ENCODE measurements at regions of chr6 and their contacts with region 1.

Region 1: DNA sequence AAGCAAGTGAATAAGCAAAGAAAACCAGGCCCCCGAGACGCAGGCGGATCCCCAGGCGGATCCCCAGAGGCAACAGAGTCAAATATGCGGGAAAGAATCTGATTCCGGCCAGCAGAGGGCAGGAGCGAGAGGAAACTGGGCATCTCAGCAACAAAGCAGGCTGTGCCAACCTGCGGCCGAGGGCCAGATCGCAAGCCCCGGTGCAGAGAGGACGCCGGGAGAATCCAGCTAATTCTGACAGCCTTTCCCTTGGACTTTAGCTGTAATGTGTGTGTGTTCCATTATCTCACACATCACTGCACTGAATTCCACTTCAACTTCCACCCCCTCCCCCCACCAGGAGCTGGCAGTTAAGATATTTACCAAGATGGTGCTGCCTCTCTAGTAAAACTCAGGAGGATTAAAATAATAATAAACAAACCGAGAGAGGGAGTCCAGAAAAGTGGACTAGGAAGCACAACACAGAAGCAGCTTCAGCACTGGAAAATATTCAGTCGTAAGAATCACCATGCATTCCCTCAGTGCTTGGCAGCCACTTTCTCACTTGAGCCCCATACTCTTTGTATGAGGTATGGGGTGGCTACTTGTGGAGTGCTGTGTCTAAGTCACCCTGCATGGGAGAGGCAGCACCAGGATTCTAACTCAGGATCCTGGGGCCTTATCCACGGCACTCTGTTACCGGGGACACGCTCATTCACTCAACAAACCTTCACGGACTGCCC is 66.2 kb upstream of the SNX9 start:
- DNase-seq: peak; percentile 64 to 86 (median 78)
- ATAC-seq: peak; percentile 11
- H3K4me3 ChIP-seq: peak overlapping the region in 1 of 2 experiments; percentile 7
- H3K4me3 Mint-ChIP-seq: peak overlapping the region; percentile 7
- H3K27ac ChIP-seq: no peak overlapping the region
- H3K27ac Mint-ChIP-seq: peak overlapping the region; percentile 89
- H3K4me1 ChIP-seq: peaks cover 63% of the 10 kb centered on the region
- H3K4me1 Mint-ChIP-seq: peaks cover 72% of the 10 kb centered on the region
- H3K27me3 ChIP-seq: no peaks in the 10 kb centered on the region
- H3K27me3 Mint-ChIP-seq: no peaks in the 10 kb centered on the region
- CTCF ChIP-seq: peak; percentile 83

Region 2: GRCh38 chr6:157774153-157775135 is 17.6 kb after region 1 on chr6:
- CTCF ChIA-PET with region 1: interaction called, 48 read pairs
- POLR2A ChIA-PET with region 1: interaction called, 4 read pairs
- intact Hi-C with region 1: no loop called
- DNase-seq: peak in 2 of 9 experiments; percentile 25 to 54
- ATAC-seq: peak; percentile 58
- H3K4me3 ChIP-seq: no peak overlapping the region
- H3K4me3 Mint-ChIP-seq: no peak overlapping the region
- H3K27ac ChIP-seq: no peak overlapping the region
- H3K27ac Mint-ChIP-seq: peak overlapping the region; percentile 50
- H3K4me1 ChIP-seq: peaks cover 11% of the 10 kb centered on the region
- H3K4me1 Mint-ChIP-seq: peaks cover 21% of the 10 kb centered on the region
- H3K27me3 ChIP-seq: peaks cover 0 to 2% of the 10 kb centered on the region in 2 experiments
- H3K27me3 Mint-ChIP-seq: peaks cover 2% of the 10 kb centered on the region
- CTCF ChIP-seq: no peak

Region 3: DNA sequence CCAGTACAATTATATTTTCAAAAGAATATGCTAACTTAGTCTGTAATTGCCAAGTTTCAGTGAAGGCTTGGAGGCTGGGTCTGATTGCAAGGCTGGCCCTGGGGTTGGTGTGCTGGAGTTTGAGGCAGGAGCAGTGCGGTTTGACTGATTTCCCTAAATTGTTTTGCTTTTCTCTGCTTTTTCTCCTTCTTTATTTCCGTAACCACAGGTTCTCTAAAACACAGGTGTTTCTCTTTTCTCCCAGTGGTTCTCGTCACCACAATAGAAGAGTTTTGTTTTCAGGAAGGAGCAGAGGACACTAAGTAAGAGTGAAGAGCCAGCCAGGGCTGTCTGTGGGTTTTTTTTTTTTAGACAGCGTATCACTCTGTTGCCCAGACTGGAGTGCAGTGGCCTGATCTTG is 58.0 kb after region 1 on chr6:
- CTCF ChIA-PET with region 1: interaction called, 11 read pairs
- POLR2A ChIA-PET with region 1: no interaction called
- intact Hi-C with region 1: no loop called
- DNase-seq: peak in 3 of 9 experiments; percentile 20 to 46 (median 22)
- ATAC-seq: peak; percentile 64
- H3K4me3 ChIP-seq: no peak overlapping the region
- H3K4me3 Mint-ChIP-seq: peak overlapping the region; percentile 33
- H3K27ac ChIP-seq: peak overlapping the region in 1 of 2 experiments; percentile 17
- H3K27ac Mint-ChIP-seq: peak overlapping the region; percentile 86
- H3K4me1 ChIP-seq: peaks cover 40% of the 10 kb centered on the region
- H3K4me1 Mint-ChIP-seq: peaks cover 48% of the 10 kb centered on the region
- H3K27me3 ChIP-seq: no peaks in the 10 kb centered on the region
- H3K27me3 Mint-ChIP-seq: no peaks in the 10 kb centered on the region
- CTCF ChIP-seq: no peak

Region 4: GRCh38 chr6:157845493-157846259 is 88.8 kb after region 1 on chr6:
- CTCF ChIA-PET with region 1: interaction called, 19 read pairs
- POLR2A ChIA-PET with region 1: interaction called, 5 read pairs
- intact Hi-C with region 1: no loop called
- DNase-seq: no peak
- ATAC-seq: no peak
- H3K4me3 ChIP-seq: no peak overlapping the region
- H3K4me3 Mint-ChIP-seq: no peak overlapping the region
- H3K27ac ChIP-seq: no peak overlapping the region
- H3K27ac Mint-ChIP-seq: no peak overlapping the region
- H3K4me1 ChIP-seq: peaks cover 12% of the 10 kb centered on the region
- H3K4me1 Mint-ChIP-seq: peaks cover 75% of the 10 kb centered on the region
- H3K27me3 ChIP-seq: no peaks in the 10 kb centered on the region
- H3K27me3 Mint-ChIP-seq: no peaks in the 10 kb centered on the region
- CTCF ChIP-seq: no peak

Region 5: GRCh38 chr6:157885211-157885788 is 128.4 kb after region 1 on chr6:
- CTCF ChIA-PET with region 1: interaction called, 233 read pairs
- POLR2A ChIA-PET with region 1: interaction called, 9 read pairs
- intact Hi-C with region 1: no loop called
- DNase-seq: peak in 8 of 9 experiments; percentile 19 to 87 (median 60)
- ATAC-seq: peak; percentile 81
- H3K4me3 ChIP-seq: no peak overlapping the region
- H3K4me3 Mint-ChIP-seq: peak overlapping the region; percentile 36
- H3K27ac ChIP-seq: peak overlapping the region; percentile 75 to 89
- H3K27ac Mint-ChIP-seq: peak overlapping the region; percentile 93
- H3K4me1 ChIP-seq: peaks cover 32% of the 10 kb centered on the region
- H3K4me1 Mint-ChIP-seq: peaks cover 49% of the 10 kb centered on the region
- H3K27me3 ChIP-seq: no peaks in the 10 kb centered on the region
- H3K27me3 Mint-ChIP-seq: no peaks in the 10 kb centered on the region
- CTCF ChIP-seq: no peak

Region 6: GRCh38 chr6:157905590-157906342 is 148.9 kb after region 1 on chr6:
- CTCF ChIA-PET with region 1: interaction called, 10 read pairs
- POLR2A ChIA-PET with region 1: no interaction called
- intact Hi-C with region 1: no loop called
- DNase-seq: no peak
- ATAC-seq: no peak
- H3K4me3 ChIP-seq: no peak overlapping the region
- H3K4me3 Mint-ChIP-seq: no peak overlapping the region
- H3K27ac ChIP-seq: no peak overlapping the region
- H3K27ac Mint-ChIP-seq: no peak overlapping the region
- H3K4me1 ChIP-seq: no peaks in the 10 kb centered on the region
- H3K4me1 Mint-ChIP-seq: peaks cover 11% of the 10 kb centered on the region
- H3K27me3 ChIP-seq: no peaks in the 10 kb centered on the region
- H3K27me3 Mint-ChIP-seq: no peaks in the 10 kb centered on the region
- CTCF ChIP-seq: no peak

Region 7: GRCh38 chr6:158072083-158072721 is 315.3 kb after region 1 on chr6:
- CTCF ChIA-PET with region 1: interaction called, 23 read pairs
- POLR2A ChIA-PET with region 1: no interaction called
- intact Hi-C with region 1: loop called (anchors 1 to 5 kb)
- DNase-seq: peak; percentile 35 to 81 (median 62)
- ATAC-seq: peak; percentile 80
- H3K4me3 ChIP-seq: no peak overlapping the region
- H3K4me3 Mint-ChIP-seq: no peak overlapping the region
- H3K27ac ChIP-seq: no peak overlapping the region
- H3K27ac Mint-ChIP-seq: no peak overlapping the region
- H3K4me1 ChIP-seq: peaks cover 8% of the 10 kb centered on the region
- H3K4me1 Mint-ChIP-seq: peaks cover 6% of the 10 kb centered on the region
- H3K27me3 ChIP-seq: no peaks in the 10 kb centered on the region
- H3K27me3 Mint-ChIP-seq: no peaks in the 10 kb centered on the region
- CTCF ChIP-seq: peak; percentile 80

Region 8: DNA sequence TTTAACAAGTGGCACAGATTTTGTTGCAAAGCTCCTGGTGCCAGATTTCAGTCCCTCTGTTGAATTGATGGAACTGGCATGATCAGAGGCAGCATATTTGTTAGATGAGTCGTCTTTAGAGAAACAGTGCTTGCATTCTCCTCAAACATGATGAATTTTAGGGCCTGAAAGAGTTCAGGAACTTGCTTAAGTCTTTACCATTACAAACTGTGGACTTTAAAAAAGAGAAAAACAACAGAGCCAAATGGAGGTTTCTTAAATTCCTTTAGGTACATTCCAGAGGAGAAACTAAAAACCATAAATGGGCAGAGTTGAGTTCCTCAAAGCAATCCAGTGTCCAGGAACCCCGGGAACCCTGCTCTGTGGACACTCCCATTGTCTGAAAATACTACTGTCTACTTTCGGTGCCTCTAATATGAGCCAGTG is 413.8 kb after region 1 on chr6:
- CTCF ChIA-PET with region 1: no interaction called
- POLR2A ChIA-PET with region 1: no interaction called
- intact Hi-C with region 1: no loop called
- DNase-seq: no peak
- ATAC-seq: no peak
- H3K4me3 ChIP-seq: no peak overlapping the region
- H3K4me3 Mint-ChIP-seq: no peak overlapping the region
- H3K27ac ChIP-seq: no peak overlapping the region
- H3K27ac Mint-ChIP-seq: no peak overlapping the region
- H3K4me1 ChIP-seq: peaks cover 7% of the 10 kb centered on the region
- H3K4me1 Mint-ChIP-seq: peaks cover 37% of the 10 kb centered on the region
- H3K27me3 ChIP-seq: no peaks in the 10 kb centered on the region
- H3K27me3 Mint-ChIP-seq: no peaks in the 10 kb centered on the region
- CTCF ChIP-seq: no peak